ENCODE measurements at regions of chr1 and their contacts with region 1.

Region 1: GRCh38 chr1:117121776-117122697 is 488 bp upstream of the TRIM45 start:
- DNase-seq: peak; percentile 97
- ATAC-seq: peak; percentile 97 to 99

Region 2: DNA sequence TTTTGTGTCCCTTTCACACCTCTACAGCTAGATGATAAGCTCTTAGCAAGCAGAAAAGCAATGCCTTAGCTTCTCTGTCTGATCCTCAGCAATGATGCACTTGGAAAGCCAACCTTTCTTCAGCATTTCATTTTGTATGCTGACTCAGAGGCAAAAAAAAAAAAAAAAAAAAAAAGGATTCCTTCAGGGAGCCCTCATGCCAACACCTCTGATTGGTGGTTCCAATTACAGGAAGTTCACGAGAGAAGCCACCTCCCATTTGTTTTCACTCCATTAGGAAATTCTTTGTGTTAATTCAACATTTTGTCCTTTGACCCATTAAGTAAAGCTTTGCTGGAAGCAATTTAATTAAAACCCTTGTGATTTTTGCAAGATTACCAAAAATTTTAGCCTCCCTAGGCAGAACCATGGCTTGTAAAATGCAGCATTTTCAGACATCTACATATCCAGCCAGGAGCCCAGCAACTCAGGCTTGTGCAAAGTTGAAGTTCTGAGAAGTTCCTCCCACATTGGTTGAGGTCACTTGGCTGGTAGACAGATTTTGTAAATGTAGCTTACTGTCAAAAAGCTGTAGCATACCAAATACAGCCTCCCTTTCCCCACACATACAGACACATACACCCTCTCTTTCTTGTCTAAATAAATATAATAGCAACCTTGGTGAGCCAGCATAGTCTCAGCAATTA is 115.8 kb after region 1 on chr1:
- intact Hi-C with region 1: loop called in 1 of 2 experiments (anchors 10 kb)
- DNase-seq: no peak
- ATAC-seq: peak; percentile 61 to 80

Region 3: DNA sequence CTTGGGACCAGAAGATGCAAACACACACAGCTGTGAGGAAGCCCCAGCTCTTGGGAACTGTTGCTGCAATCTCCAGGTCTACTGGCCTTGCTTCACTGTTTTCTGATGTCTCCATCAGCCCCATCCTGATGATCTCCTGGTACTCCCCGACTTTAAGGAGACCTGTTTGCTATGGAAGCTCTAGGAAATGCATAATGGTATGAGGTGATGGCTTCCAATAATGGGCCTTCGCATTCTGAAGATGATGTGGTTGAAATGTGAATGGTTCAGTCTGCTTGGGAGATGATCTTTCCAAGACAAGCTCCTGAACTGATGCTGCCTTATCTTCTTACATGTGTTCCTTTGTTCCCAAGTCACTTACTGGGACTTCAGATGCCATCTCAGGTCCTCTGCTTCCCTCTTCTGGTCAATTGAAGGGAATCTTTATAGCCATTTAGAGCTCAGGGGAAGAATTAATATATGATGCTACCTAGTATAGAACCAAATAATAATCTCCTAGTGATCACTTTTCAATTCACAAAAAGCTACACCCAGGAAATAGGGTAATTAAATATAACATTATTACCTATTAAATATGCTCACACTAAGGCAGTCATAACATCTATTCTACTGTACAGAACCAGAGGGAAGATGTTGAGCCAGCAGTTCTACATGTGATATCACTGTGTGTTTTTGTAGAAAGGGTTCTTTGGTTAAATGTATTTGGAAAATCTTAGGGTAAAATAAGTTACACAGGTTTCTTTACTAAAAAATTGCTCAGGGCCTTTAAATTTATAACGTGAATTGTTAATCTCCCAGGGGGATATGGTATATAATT is 162.6 kb after region 1 on chr1:
- intact Hi-C with region 1: loop called in 1 of 2 experiments (anchors 5 kb)
- DNase-seq: no peak
- ATAC-seq: peak; percentile 72 to 90

Region 4: GRCh38 chr1:117367047-117368018 is 245.3 kb after region 1 on chr1 and contains the start of gene MAN1A2:
- intact Hi-C with region 1: loop called in 1 of 2 experiments (anchors 5 kb)
- DNase-seq: peak; percentile 91
- ATAC-seq: peak; percentile 91 to 95
- total RNA-seq, gene MAN1A2: 36.3 TPM

Measured in left cardiac atrium (tissue), 4 donors.